Astrocyte of the cerebellum (primary cell): ENCODE measurements at regions of chr5 and their contacts with region 1.

Region 1: GRCh38 chr5:68534131-68534940 is 318.8 kb downstream of the PIK3R1 start:
- DNase-seq: peak; percentile 66
- H3K4me3 ChIP-seq: no peak overlapping the region
- CTCF ChIP-seq: no peak

Region 2: GRCh38 chr5:68315679-68316271 is 218.6 kb before region 1 on chr5:
- in situ Hi-C with region 1: loop called (anchors 25 kb)
- DNase-seq: no peak
- H3K4me3 ChIP-seq: no peak overlapping the region
- CTCF ChIP-seq: no peak